ENCODE measurements at regions of chr10 and their contacts with region 1.

Region 1: GRCh38 chr10:22436884-22437619 is 91.8 kb downstream of the SPAG6 start:
- DNase-seq: peak; percentile 94

Region 2: DNA sequence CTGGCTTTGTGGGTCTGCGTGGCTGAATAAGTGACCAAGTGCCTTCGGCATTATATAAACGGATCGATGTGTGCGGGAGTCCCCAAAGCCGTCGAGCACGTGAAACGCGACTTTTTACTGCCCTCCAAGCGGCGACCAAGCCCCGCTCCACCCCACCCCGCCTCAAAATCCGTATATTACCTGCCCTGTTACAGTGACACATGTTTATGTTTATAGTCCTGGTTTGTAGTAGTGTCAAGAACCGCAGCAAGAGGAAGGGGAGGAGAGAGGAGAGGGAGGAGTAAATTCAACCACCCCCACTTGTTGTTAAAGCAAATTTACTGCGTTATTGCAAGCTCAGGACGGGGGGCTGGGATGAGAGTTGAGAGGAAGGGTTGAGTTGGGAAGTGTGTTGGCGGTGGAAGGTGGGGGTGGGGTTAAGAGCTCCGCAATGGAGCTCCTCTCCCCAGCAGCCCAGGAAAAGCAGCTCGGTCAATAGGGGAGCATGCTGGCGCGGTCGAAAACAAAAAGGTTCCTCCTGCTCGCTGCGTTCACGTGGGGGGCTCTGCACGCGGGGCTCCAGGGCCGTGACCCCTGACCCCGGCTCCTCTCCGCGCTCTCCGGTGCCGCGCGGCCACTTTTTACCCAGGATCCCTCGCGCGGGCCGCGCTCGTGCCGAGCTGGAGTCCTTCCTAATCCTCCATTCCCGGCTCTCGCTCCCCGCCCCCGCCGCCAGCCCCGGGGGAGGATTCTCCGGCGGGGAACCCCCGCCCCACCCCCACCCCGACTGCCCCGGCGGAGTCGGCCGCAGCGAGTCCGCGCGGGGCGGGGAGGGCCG is 911.5 kb before region 1 on chr10 and contains the start of gene SKIDA1:
- intact Hi-C with region 1: loop called (anchors 10 kb)
- DNase-seq: peak; percentile 90
- total RNA-seq, gene SKIDA1: 1.8 TPM

Region 3: GRCh38 chr10:22228943-22229801 is 207.9 kb before region 1 on chr10:
- intact Hi-C with region 1: loop called (anchors 10 kb)
- DNase-seq: peak; percentile 88

Region 4: GRCh38 chr10:22316285-22317120 is 120.5 kb before region 1 on chr10 and contains the start of gene COMMD3:
- intact Hi-C with region 1: loop called (anchors 5 kb)
- DNase-seq: peak; percentile 96
- total RNA-seq, gene COMMD3: 71.6 TPM

Region 5: GRCh38 chr10:22356333-22356873 is 80.6 kb before region 1 on chr10:
- intact Hi-C with region 1: no loop called
- DNase-seq: no peak

Region 6: DNA sequence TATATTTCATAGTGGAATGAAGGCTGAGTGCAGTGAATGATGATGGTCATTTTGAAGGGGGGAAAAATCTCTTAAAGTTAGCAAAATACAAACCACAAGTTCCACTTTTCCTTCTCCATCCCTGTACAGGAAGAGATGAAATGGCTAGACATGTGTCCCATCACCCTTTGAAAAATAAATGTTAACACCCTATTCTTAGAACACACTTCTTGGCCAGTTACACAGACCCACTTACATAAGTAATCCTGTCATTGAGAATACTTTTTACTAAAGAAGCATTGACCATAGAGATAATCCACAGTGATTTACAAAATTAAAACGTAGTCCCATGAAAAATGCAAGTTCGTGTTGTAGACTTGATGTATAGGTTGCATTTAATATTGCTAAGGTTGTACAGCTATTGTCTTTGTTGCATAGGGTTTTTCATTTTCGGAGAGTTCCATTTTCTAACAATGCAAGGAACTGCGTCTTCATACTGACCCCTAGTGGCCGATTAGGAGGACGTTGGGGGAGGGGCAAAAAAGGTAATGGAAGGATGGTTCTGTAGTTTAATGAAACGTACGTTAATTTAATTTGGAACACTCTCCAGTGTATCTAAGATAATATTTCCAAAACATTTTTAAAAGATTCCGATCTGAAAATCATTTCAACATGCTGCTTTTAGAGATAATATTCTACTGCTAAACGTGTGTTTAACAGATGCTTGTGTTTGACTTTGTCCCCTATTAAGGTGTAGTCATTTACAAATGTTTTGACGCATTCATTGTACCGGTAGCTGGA is 551.7 kb after region 1 on chr10:
- intact Hi-C with region 1: loop called (anchors 2 kb)
- DNase-seq: no peak